ENCODE measurements at regions of chr19 and their contacts with region 1.

Region 1: GRCh38 chr19:1540365-1540925 is 16.6 kb downstream of the PLK5 start:
- DNase-seq: no peak
- H3K4me3 ChIP-seq: no peak overlapping the region
- H3K27ac ChIP-seq: no peak overlapping the region
- H3K4me1 ChIP-seq: peaks cover 0 to 5% of the 10 kb centered on the region in 2 experiments; a peak in 1 of 4 replicates
- H3K27me3 ChIP-seq: no peaks in the 10 kb centered on the region
- CTCF ChIP-seq: no peak
- EP300 ChIP-seq: no peak
- RAD21 ChIP-seq: no peak

Region 2: DNA sequence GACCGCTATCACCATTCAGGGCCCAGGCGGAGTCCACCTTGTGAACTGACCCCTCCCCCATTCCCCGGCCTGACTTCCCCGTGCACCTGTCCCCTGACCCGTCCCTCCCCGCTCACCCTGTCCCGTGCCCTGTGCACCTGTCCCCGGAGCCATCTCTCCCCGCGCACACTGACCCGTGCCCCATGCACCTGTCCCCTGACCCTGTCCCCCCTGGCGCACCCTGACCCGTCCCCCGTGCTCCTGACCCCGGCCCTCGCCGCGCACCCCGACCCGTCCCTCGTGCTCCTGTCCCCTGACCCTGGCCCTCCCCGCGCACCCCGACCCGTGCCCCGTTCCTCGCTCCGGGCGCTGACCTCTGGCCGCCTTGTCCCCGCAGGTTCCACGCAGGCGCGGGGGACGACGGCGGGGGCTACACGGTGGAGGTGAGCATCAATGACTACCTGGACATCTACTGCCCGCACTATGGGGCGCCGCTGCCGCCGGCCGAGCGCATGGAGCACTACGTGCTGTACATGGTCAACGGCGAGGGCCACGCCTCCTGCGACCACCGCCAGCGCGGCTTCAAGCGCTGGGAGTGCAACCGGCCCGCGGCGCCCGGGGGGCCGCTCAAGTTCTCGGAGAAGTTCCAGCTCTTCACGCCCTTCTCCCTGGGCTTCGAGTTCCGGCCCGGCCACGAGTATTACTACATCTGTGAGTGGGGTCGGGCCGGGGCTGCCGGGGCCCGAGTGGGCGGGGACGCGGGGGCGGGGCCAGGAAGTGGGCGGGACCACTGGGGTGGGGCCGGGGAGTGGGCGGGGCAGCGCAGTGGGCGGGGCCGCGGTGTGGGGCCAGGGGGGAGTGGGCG is 245.1 kb before region 1 on chr19:
- CTCF ChIA-PET with region 1: no interaction called
- POLR2A ChIA-PET with region 1: no interaction called
- DNase-seq: peak; percentile 97
- H3K4me3 ChIP-seq: no peak overlapping the region
- H3K27ac ChIP-seq: no peak overlapping the region
- H3K4me1 ChIP-seq: no peaks in the 10 kb centered on the region
- H3K27me3 ChIP-seq: no peaks in the 10 kb centered on the region
- CTCF ChIP-seq: no peak
- EP300 ChIP-seq: no peak
- RAD21 ChIP-seq: no peak

Region 3: DNA sequence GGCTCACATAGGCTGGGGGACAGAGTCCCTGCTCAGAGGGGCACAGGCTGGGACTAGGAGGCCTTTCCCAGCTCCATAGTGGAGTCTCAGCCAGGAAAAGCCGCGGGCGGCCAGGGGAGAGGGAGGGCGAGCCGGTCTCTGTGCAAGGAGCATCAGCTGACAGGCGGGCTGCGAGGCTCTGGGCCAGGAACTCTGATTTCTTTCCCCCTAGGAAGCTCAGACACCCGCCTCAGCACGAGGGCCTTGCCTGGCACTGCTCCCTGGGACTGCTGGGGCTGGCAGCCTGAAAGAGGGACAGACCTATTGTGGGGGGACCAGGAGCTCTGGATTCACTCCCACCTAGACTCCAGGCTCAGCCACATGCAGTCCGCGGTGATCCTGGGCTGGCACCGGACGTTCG is 18.8 kb before region 1 on chr19:
- CTCF ChIA-PET with region 1: interaction called, 14 read pairs
- POLR2A ChIA-PET with region 1: no interaction called
- DNase-seq: no peak
- H3K4me3 ChIP-seq: no peak overlapping the region
- H3K27ac ChIP-seq: no peak overlapping the region
- H3K4me1 ChIP-seq: no peaks in the 10 kb centered on the region
- H3K27me3 ChIP-seq: peaks cover 38% of the 10 kb centered on the region
- CTCF ChIP-seq: no peak
- EP300 ChIP-seq: no peak
- RAD21 ChIP-seq: no peak

Region 4: DNA sequence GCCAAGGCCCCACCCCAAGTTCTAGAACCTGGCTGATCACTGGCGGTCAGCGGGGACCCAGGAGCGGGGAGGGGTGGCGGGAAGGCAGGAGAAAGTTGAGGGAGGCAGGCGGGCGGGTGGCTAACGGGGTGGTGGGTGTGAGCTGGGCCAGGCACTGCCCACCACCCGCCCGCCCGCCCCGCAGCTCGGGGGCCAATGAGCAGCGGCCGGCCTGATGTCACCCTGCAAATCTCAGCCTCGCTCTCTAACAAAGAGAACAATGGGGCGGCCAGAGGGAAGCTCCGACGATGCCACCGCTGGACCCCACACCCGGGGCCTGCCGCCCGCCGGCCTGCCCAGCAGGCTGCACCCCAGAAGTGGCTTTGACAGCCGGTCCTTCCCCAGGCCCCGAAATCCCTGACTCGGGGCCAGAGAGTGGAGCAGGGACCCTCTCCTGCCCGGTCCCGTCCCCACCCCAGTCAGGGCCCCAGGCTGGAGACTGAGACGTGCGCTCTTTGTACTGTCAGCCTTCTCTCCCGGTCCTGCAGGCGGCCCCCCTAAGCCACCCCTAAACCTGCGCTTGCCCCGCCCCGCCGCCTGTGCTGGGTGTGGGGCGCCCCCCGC is 26.2 kb after region 1 on chr19:
- CTCF ChIA-PET with region 1: interaction called, 37 read pairs
- POLR2A ChIA-PET with region 1: no interaction called
- DNase-seq: peak; percentile 95
- H3K4me3 ChIP-seq: peak overlapping the region; percentile 66 to 93
- H3K27ac ChIP-seq: peak overlapping the region; percentile 86
- H3K4me1 ChIP-seq: peaks cover 0 to 12% of the 10 kb centered on the region in 2 experiments; a peak in 2 of 4 replicates
- H3K27me3 ChIP-seq: no peaks in the 10 kb centered on the region
- CTCF ChIP-seq: no peak
- EP300 ChIP-seq: no peak
- RAD21 ChIP-seq: no peak

Region 5: DNA sequence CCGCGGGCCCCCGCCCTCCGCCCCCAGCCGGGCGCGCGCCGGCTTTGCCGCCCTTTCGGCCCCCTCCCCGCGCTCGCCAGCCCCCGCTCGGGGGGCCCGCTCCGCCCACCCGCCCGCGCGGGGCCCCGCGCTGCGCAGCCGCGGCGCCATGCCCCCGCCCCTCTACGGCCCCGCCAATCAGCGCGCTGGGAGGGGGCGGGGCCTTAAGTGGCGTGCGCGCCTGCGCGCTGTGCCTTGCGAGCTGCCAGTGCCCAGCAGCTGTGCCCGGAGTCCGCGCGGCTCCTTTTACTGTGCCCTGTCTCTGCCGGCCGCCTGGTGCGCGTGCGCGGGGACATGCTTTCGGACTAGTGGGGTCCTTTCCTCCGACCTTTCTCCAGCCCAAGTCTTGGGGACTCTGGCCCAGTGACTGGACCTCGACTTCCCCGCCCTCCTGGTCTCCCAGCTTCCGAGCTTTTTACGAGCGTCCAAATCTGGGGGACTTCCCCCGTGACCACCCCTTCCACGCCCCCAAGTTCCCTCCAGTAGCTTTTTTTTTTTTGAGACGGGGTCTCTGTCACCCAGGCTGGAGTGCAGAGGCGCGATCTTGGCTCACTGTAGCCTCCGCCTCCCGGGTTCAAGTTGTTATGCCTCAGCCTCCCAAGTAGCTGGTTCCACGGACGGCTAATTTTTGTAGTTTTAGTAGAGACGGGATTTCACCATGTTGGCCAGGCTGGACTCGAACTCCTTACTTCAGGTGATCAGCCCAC is 52.5 kb after region 1 on chr19 and contains the start of gene MBD3:
- CTCF ChIA-PET with region 1: interaction called, 24 read pairs
- POLR2A ChIA-PET with region 1: no interaction called
- DNase-seq: peak; percentile 100
- H3K4me3 ChIP-seq: peak within 1 kb of the TSS; percentile 69 to 88
- H3K27ac ChIP-seq: peak within 1 kb of the TSS; percentile 82 to 93
- H3K4me1 ChIP-seq: peaks cover 9% of the 10 kb centered on the region in 2 experiments; a peak in 1 of 4 replicates
- H3K27me3 ChIP-seq: no peaks in the 10 kb centered on the region
- CTCF ChIP-seq: no peak
- EP300 ChIP-seq: peak in 1 of 2 experiments; percentile 45; a peak in 1 of 4 replicates
- RAD21 ChIP-seq: no peak
- polyA plus RNA-seq, gene MBD3: 74.1 and 96.5 TPM in 2 replicates

Region 6: GRCh38 chr19:1794424-1795172 is 254.2 kb after region 1 on chr19:
- CTCF ChIA-PET with region 1: interaction called, 29 read pairs
- POLR2A ChIA-PET with region 1: no interaction called
- DNase-seq: no peak
- H3K4me3 ChIP-seq: no peak overlapping the region
- H3K27ac ChIP-seq: no peak overlapping the region
- H3K4me1 ChIP-seq: peaks cover 0 to 8% of the 10 kb centered on the region in 2 experiments; a peak in 1 of 4 replicates
- H3K27me3 ChIP-seq: no peaks in the 10 kb centered on the region
- CTCF ChIP-seq: no peak
- EP300 ChIP-seq: no peak
- RAD21 ChIP-seq: no peak